Activated CD4-positive, alpha-beta T cell treated with anti-CD3 and anti-CD28 coated beads for 36 hours (primary cell): ENCODE measurements at regions of chr7 and their contacts with region 1.

Region 1: GRCh38 chr7:124856299-124856888 is 73.2 kb downstream of the POT1 start:
- DNase-seq: no peak
- ATAC-seq: no peak
- H3K4me3 Mint-ChIP-seq: no peak overlapping the region
- H3K27ac Mint-ChIP-seq: no peak overlapping the region
- H3K4me1 Mint-ChIP-seq: no peaks in the 10 kb centered on the region
- H3K27me3 Mint-ChIP-seq: no peaks in the 10 kb centered on the region

Region 2: DNA sequence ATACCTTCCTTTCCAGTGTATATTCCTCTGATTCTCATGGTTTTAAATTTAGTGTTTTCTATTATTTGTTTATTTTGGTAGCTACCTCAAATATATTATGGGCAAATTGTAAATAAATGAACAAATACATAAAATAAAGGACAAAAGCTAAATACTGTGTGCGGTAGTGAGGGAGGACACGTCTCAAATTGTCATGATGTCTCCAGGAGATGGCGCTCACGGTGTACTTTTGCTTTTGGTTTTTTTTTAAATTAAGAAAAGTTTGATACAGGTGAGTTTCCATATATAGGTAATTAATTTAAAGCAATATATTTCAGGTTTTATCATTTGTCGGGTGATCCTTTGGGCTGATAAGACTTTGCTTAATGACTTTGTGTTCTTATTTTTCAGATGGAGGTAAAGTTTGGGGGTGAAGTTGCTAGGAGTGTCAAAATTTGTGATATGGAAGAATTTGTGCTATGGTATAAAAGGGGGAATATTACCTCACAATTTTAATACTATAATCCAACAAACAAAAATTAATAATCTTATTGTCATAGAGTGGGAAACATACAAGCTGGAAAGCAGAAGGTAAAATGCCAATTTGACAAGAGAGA is 755.1 kb before region 1 on chr7:
- CTCF ChIA-PET with region 1: no interaction called
- POLR2A ChIA-PET with region 1: no interaction called
- intact Hi-C with region 1: loop called in 1 of 2 experiments (anchors 2 kb)
- DNase-seq: peak; percentile 25
- ATAC-seq: no peak
- H3K4me3 Mint-ChIP-seq: no peak overlapping the region
- H3K27ac Mint-ChIP-seq: no peak overlapping the region
- H3K4me1 Mint-ChIP-seq: no peaks in the 10 kb centered on the region
- H3K27me3 Mint-ChIP-seq: no peaks in the 10 kb centered on the region

Region 3: DNA sequence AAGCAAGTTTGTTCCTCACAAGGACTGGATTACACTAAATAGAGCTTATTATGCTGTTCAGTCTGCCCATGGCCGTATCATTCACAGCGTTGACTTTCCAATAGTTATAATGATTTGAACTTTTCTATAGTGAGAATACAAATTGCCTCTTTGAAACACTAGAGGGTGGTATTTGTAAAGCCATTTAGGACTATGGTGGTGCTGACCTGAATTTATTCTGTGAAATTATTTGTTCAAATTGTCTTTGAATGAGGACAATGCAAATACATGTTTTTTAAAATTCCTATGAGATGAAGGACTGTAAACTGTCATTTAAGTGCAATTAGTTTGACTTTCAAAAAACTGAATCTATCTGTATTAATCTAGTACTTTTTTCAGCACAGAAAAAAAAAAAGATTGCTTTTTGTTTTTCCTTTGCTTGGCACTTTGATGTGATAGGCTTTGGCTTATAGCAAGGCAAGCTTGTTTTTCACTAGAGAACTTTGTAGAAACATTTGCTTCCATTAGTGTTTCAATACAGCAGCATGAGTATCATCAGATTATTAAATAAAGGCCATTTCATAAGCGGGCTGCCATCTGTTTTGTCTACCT is 700.9 kb before region 1 on chr7:
- CTCF ChIA-PET with region 1: interaction called, 4 read pairs
- POLR2A ChIA-PET with region 1: no interaction called
- intact Hi-C with region 1: loop called in 1 of 2 experiments (anchors 5 kb)
- DNase-seq: no peak
- ATAC-seq: no peak
- H3K4me3 Mint-ChIP-seq: no peak overlapping the region
- H3K27ac Mint-ChIP-seq: no peak overlapping the region
- H3K4me1 Mint-ChIP-seq: no peaks in the 10 kb centered on the region
- H3K27me3 Mint-ChIP-seq: no peaks in the 10 kb centered on the region